ENCODE measurements at regions of chr6 and their contacts with region 1.

Region 1: GRCh38 chr6:33592411-33593054 is 12.5 kb upstream of the BAK1 start:
- DNase-seq: peak; percentile 50
- H3K4me3 Mint-ChIP-seq: peak overlapping the region; percentile 68
- H3K27ac Mint-ChIP-seq: no peak overlapping the region
- H3K4me1 Mint-ChIP-seq: peaks cover 50% of the 10 kb centered on the region
- H3K27me3 Mint-ChIP-seq: peaks cover 2% of the 10 kb centered on the region

Region 2: DNA sequence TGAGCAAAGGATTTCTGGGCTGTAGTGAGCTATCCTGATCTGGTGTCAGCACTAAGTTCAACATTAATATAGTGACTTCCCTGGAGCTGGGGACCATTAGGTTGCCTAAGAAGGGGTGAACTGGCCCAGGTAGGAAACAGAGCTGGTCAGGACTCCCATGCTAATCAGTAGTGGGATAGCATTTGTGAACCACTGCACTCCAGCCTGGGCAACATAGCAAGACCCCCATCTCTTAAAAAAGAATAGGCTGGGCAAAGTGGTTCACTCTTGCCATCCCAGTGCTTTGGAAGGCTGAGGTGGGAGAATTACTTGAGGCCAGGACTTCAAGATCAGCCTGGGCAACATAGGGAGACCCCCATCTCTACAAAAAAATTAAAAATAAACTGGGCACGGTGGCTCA is 51.8 kb before region 1 on chr6:
- CTCF ChIA-PET with region 1: no interaction called
- POLR2A ChIA-PET with region 1: no interaction called
- DNase-seq: no peak
- H3K4me3 Mint-ChIP-seq: no peak overlapping the region
- H3K27ac Mint-ChIP-seq: no peak overlapping the region
- H3K4me1 Mint-ChIP-seq: peaks cover 2% of the 10 kb centered on the region
- H3K27me3 Mint-ChIP-seq: no peaks in the 10 kb centered on the region

Region 3: GRCh38 chr6:33607784-33608161 is 15.2 kb after region 1 on chr6:
- CTCF ChIA-PET with region 1: interaction called, 34 read pairs
- POLR2A ChIA-PET with region 1: interaction called, 4 read pairs
- DNase-seq: peak; percentile 67
- H3K4me3 Mint-ChIP-seq: no peak overlapping the region
- H3K27ac Mint-ChIP-seq: no peak overlapping the region
- H3K4me1 Mint-ChIP-seq: peaks cover 6% of the 10 kb centered on the region
- H3K27me3 Mint-ChIP-seq: peaks cover 16% of the 10 kb centered on the region

Measured in activated CD4-positive, alpha-beta memory T cell treated with anti-CD3 and anti-CD28 coated beads, Interleukin-2, amount 10 ng/mL, durations not matched to agents 7 days and 5 days (primary cell).